Activated CD8-positive, alpha-beta memory T cell treated with anti-CD3 and anti-CD28 coated beads, Interleukin-2, amount 10 ng/mL, durations not matched to agents 7 days and 5 days (primary cell): ENCODE measurements at regions of chr3 and their contacts with region 1.

Region 1: DNA sequence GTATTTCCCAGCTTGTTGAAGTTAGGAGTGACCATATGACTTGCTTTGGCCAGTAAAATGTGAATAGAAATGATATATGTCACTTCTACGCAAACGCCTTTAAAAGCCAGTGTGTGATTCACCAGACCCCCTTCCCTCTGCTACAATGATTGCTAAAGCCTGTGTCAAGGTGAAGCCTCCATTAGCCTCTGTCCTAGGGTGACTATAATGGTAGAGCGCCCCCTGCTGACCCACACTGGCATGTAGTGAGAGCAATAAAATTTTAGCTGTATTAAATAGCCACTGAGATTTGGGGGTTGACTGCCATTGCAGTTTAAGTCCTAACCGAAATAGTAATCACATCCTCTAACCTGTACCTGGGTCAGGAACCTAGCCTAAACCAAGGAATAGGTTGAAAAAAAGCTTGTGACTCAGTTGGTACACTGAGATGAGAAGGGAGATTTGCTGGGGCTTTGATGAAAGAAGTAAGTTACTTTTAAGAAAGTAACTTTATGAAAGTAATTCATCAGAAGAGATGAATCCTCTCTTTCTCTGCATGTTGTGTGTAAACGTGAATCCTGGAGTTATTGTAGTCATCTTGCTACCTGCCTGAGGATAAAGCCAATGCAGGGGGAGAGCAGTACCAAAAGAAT is 52.6 kb downstream of the GTF2E1 start:
- DNase-seq: peak; percentile 85
- ATAC-seq: peak; percentile 96
- H3K4me3 Mint-ChIP-seq: no peak overlapping the region
- H3K27ac Mint-ChIP-seq: no peak overlapping the region
- H3K4me1 Mint-ChIP-seq: no peaks in the 10 kb centered on the region
- H3K27me3 Mint-ChIP-seq: no peaks in the 10 kb centered on the region

Region 2: GRCh38 chr3:120558771-120559241 is 236.3 kb before region 1 on chr3:
- CTCF ChIA-PET with region 1: interaction called, 42 read pairs
- DNase-seq: peak; percentile 90
- ATAC-seq: peak; percentile 93
- H3K4me3 Mint-ChIP-seq: peak overlapping the region; percentile 78
- H3K27ac Mint-ChIP-seq: peak overlapping the region; percentile 71
- H3K4me1 Mint-ChIP-seq: peaks cover 12% of the 10 kb centered on the region
- H3K27me3 Mint-ChIP-seq: peaks cover 7% of the 10 kb centered on the region

Region 3: DNA sequence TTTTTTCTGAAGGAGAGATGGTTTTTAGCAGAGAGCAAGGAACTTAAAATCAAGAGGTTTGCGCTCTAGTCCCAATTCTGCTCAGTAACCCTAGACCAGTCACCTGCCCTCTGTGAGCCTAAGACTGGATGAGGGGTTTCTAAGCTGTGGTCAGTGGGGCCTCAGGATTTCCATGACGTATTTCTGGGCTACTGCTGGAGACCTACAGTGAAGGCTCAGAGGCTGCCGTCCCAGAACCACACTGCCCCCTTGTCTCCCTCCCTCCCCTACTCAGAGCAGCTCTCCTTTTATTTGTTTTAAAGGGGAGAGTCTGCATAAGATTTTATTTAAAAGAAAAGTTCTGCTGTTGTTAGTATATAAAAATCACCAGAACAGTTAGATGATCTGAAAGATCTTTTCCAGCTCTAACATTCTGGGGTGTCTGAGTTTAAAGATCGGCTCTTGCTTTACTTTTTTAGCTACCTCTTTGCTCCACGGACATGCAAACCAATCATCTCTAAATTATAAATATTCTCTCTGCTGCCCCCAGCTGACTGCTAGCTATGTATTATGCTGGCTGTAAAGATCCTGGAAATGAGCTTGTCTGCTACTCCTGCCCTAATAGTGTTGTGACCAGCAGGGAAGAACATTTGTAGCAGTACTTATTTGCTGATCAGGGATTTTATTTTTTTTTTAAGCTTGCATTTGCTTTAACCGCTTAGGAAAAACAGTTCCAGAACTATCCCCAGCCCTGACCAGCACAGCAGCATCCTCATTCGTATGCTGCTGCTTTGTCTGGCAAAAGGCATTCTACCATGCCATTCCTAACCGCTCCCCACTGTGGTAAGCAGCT is 227.5 kb before region 1 on chr3:
- CTCF ChIA-PET with region 1: interaction called, 16 read pairs
- DNase-seq: no peak
- ATAC-seq: no peak
- H3K4me3 Mint-ChIP-seq: no peak overlapping the region
- H3K27ac Mint-ChIP-seq: no peak overlapping the region
- H3K4me1 Mint-ChIP-seq: peaks cover 2% of the 10 kb centered on the region
- H3K27me3 Mint-ChIP-seq: peaks cover 18% of the 10 kb centered on the region

Region 4: GRCh38 chr3:120596116-120596852 is 198.8 kb before region 1 on chr3 and contains the start of gene NDUFB4:
- CTCF ChIA-PET with region 1: interaction called, 11 read pairs
- DNase-seq: peak; percentile 97
- ATAC-seq: peak; percentile 99
- H3K4me3 Mint-ChIP-seq: peak within 1 kb of the TSS; percentile 82
- H3K27ac Mint-ChIP-seq: peak within 1 kb of the TSS; percentile 92
- H3K4me1 Mint-ChIP-seq: peaks cover 10% of the 10 kb centered on the region
- H3K27me3 Mint-ChIP-seq: no peaks in the 10 kb centered on the region
- total RNA-seq, gene NDUFB4: 117 to 124 TPM

Region 5: GRCh38 chr3:120780977-120781376 is 14.2 kb before region 1 on chr3:
- CTCF ChIA-PET with region 1: interaction called, 13 read pairs
- DNase-seq: no peak
- ATAC-seq: no peak
- H3K4me3 Mint-ChIP-seq: no peak overlapping the region
- H3K27ac Mint-ChIP-seq: no peak overlapping the region
- H3K4me1 Mint-ChIP-seq: peaks cover 6% of the 10 kb centered on the region
- H3K27me3 Mint-ChIP-seq: no peaks in the 10 kb centered on the region